Activated CD4-positive, alpha-beta T cell treated with anti-CD3 and anti-CD28 coated beads, Interleukin-2, amount 10 ng/mL, durations not matched to agents 24 days and 14 days (primary cell): ENCODE measurements at regions of chr6 and their contacts with region 1.

Region 1: GRCh38 chr6:151240036-151240685 is 394 bp downstream of the AKAP12 start:
- DNase-seq: peak; percentile 70
- H3K4me3 Mint-ChIP-seq: peak overlapping the region; percentile 85
- H3K27ac Mint-ChIP-seq: no peak overlapping the region
- H3K4me1 Mint-ChIP-seq: peaks cover 6% of the 10 kb centered on the region
- H3K27me3 Mint-ChIP-seq: peaks cover 71% of the 10 kb centered on the region

Region 2: DNA sequence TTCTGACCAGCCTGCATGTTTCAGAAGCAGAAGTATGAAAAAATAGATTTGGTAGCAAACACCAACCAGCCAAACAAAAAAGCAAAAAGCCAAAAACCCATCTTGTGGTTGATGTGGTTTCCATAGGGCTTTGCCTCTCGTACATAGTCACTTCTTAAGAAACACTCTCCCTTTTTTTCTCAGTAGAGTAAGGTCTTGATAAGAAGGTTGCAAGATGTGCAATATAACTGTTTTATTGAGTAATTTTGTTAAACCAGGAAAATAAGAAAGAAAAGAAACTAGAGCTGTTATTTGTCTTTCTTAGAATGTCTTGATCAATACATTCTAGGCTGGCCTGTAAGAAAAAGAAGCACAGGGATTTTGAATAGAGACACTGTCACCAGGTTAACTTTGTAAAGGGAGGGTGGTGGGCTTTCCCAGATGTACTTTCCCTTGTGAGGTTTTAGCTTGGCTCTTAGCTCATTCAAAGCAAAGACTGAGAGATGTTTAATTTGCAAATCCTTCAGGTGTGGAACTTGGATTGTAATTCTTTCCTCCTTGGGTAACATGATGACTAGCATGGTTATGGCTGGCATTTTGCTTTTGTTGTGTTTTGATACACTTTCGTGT is 49.3 kb after region 1 on chr6:
- intact Hi-C with region 1: loop called (anchors 2 kb)
- DNase-seq: peak; percentile 78
- H3K4me3 Mint-ChIP-seq: peak overlapping the region; percentile 11
- H3K27ac Mint-ChIP-seq: no peak overlapping the region
- H3K4me1 Mint-ChIP-seq: peaks cover 26% of the 10 kb centered on the region
- H3K27me3 Mint-ChIP-seq: peaks cover 45% of the 10 kb centered on the region